Activated naive CD4-positive, alpha-beta T cell treated with anti-CD3 and anti-CD28 coated beads for 36 hours (primary cell): ENCODE measurements at regions of chrX and their contacts with region 1.

Region 1: DNA sequence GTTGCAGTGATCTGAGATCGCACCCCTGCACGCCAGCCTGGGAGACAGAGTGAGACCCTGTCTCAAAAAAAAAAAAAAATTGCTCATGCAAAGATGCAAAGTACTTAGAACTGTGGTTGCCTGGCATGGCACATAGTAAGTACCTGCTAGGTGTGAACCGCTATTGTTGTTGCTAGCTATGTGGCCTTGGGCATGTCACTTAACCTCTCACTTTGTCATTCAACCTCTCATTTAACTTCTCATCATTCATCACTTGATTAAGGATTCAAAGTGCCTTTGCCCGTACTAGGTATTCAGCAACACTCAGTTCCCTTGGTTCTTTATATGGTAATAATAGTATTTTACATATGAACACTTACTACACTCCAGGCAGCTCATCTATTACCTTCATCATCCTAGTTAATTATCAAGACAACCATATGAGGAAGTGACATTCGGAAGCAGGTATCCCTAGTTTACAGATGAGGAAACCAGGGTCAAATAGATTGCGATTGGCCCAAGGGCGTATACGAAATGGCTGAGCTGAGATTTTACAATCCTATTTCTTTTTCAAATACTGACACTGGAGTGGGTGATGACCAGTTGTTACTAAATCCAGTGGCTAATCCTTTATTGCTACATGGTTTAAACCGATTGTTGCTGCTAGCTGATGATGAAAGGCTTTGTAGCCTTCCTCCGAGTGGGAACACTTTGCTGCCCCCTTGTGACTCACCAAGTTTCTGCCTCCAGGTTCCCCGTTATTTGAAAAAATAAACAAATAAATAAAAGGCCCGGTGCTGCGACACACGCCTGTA is 28.8 kb upstream of the SOWAHD start:
- DNase-seq: peak; percentile 81
- H3K4me3 Mint-ChIP-seq: no peak overlapping the region
- H3K27ac Mint-ChIP-seq: no peak overlapping the region
- H3K4me1 Mint-ChIP-seq: peaks cover 6% of the 10 kb centered on the region
- H3K27me3 Mint-ChIP-seq: no peaks in the 10 kb centered on the region

Region 2: DNA sequence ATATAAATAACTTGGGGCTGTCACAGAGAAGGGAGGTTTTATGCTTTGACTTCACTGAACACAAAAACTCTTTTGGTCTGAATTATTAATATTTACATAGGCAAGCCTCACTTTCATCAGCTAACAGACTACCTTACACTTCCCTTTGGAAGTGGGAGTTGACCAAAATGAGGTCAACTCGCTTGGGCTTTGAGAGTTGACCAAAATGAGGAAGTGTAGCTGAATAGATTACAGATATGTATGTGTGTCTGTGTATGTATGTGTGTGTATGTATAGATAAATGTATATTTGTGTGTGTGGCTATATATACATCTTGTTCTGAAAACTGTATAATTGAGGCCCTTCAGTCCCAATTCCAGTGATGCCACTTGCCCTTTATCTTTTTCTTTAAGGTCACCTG is 1115.5 kb before region 1 on chrX:
- CTCF ChIA-PET with region 1: no interaction called
- intact Hi-C with region 1: no loop called
- DNase-seq: no peak
- H3K4me3 Mint-ChIP-seq: no peak overlapping the region
- H3K27ac Mint-ChIP-seq: no peak overlapping the region
- H3K4me1 Mint-ChIP-seq: peaks cover 3% of the 10 kb centered on the region
- H3K27me3 Mint-ChIP-seq: no peaks in the 10 kb centered on the region

Region 3: GRCh38 chrX:119655125-119655524 is 74.5 kb before region 1 on chrX:
- CTCF ChIA-PET with region 1: no interaction called
- intact Hi-C with region 1: loop called (anchors 2 kb)
- DNase-seq: peak; percentile 72
- H3K4me3 Mint-ChIP-seq: peak overlapping the region; percentile 10
- H3K27ac Mint-ChIP-seq: peak overlapping the region; percentile 79
- H3K4me1 Mint-ChIP-seq: peaks cover 39% of the 10 kb centered on the region
- H3K27me3 Mint-ChIP-seq: no peaks in the 10 kb centered on the region

Region 4: DNA sequence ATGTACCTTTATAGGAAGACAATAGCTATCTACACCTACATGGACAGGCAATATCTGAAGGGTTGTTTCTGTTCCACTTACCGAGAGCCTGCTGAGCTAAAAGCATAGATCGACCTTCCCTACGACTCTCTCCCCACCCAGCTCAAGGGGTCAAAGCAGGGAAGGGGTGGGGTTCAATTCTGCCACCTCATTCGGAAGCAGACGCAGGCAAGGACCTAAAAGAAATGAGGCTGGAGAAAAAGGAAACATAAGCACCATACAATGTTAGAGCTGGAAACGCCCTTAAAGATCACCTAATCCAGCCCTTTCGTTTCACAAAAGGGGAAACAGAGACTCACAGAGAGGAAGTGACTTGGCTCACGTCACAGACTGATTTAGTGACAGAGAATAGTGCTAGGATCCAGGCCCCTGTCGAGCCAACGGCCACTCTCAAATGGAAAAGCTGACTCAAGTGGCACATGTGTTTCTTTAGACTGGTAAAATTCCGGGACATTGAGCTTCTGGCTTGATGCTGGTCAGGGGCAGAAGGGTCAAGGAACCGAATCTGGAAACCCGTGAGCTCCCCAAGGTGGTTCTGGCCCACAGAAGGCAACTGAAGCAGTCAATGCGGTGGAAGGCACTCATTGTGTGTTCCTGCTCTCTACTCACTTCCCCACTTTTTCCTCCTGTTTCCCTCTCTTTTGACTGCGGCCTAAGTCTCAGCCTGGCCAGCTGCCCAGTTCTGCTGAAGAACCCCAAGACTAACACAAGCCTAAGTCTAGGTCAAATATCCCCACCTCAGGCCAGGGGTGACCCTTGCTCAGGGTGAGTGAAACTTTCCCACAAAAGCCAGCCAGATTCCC is 44.2 kb before region 1 on chrX:
- CTCF ChIA-PET with region 1: interaction called, 10 read pairs
- intact Hi-C with region 1: no loop called
- DNase-seq: peak; percentile 80
- H3K4me3 Mint-ChIP-seq: peak overlapping the region; percentile 84
- H3K27ac Mint-ChIP-seq: peak overlapping the region; percentile 100
- H3K4me1 Mint-ChIP-seq: peaks cover 50% of the 10 kb centered on the region
- H3K27me3 Mint-ChIP-seq: no peaks in the 10 kb centered on the region

Region 5: GRCh38 chrX:119698845-119699244 is 30.8 kb before region 1 on chrX:
- CTCF ChIA-PET with region 1: interaction called, 12 read pairs
- intact Hi-C with region 1: loop called (anchors 1 kb)
- DNase-seq: no peak
- H3K4me3 Mint-ChIP-seq: no peak overlapping the region
- H3K27ac Mint-ChIP-seq: no peak overlapping the region
- H3K4me1 Mint-ChIP-seq: peaks cover 4% of the 10 kb centered on the region
- H3K27me3 Mint-ChIP-seq: no peaks in the 10 kb centered on the region